ENCODE measurements at regions of chr17 and their contacts with region 1.

Region 1: GRCh38 chr17:60599620-60600489 is at the start of gene PPM1D:
- DNase-seq: peak; percentile 99
- ATAC-seq: peak; percentile 93
- H3K4me3 ChIP-seq: peak within 1 kb of the TSS; percentile 82 to 98 (median 92)
- H3K4me3 Mint-ChIP-seq: peak within 1 kb of the TSS; percentile 91
- H3K27ac ChIP-seq: peak within 1 kb of the TSS; percentile 92 to 94
- H3K27ac Mint-ChIP-seq: peak within 1 kb of the TSS; percentile 92
- H3K4me1 ChIP-seq: peaks cover 24 to 28% of the 10 kb centered on the region in 2 donors
- H3K4me1 Mint-ChIP-seq: peaks cover 44% of the 10 kb centered on the region
- H3K27me3 ChIP-seq: no peaks in the 10 kb centered on the region
- H3K27me3 Mint-ChIP-seq: no peaks in the 10 kb centered on the region
- CTCF ChIP-seq: no peak
- total RNA-seq, gene PPM1D: 27.2 and 28.6 TPM in 2 replicates

Region 2: DNA sequence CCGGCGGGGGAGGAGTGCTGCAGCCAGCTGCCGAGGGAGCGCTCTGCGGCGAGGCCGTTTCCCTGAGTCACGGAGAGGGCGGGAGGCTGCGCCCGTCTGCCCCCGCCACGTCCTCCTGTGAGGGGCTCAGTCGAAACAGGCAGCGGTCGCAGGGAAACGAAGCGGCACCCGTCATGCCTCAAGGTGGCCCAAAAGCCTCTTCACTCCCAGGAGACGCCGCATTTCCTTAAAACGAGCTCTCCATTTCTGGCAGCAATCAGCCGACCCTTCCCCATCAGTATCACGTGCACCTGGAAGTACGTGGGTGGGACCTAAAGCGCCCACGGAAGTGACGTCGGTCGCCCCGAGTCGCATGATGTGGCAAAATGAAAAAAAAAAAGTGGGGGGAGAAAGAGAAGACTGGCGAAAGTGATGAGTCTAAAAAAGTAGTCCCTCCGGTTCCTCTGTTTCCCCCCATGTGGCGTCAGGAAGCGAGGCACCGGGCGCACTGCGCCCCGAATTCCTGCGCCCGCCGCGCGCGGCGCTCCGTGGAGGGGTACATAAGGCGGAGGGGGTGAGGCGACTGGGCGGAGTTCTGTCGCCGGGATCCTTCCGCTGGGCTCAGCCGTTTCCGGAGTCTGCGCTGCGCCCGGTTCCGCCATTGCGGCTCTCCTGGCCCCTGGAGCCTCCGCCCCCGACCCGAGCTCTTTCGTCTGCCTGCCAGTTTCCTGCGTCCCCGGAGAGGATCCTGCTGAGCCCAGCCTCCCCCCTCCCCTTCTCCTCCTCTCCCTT is 980.4 kb before region 1 on chr17 and contains the start of gene CLTC:
- CTCF ChIA-PET with region 1: no interaction called
- POLR2A ChIA-PET with region 1: no interaction called
- intact Hi-C with region 1: loop called (anchors 2 kb)
- DNase-seq: peak; percentile 100
- ATAC-seq: peak; percentile 80
- H3K4me3 ChIP-seq: peak within 1 kb of the TSS; percentile 69 to 100 (median 99)
- H3K4me3 Mint-ChIP-seq: peak within 1 kb of the TSS; percentile 90
- H3K27ac ChIP-seq: peak within 1 kb of the TSS; percentile 96 to 99
- H3K27ac Mint-ChIP-seq: peak within 1 kb of the TSS; percentile 97
- H3K4me1 ChIP-seq: peaks cover 44 to 48% of the 10 kb centered on the region in 2 donors
- H3K4me1 Mint-ChIP-seq: peaks cover 47% of the 10 kb centered on the region
- H3K27me3 ChIP-seq: no peaks in the 10 kb centered on the region
- H3K27me3 Mint-ChIP-seq: no peaks in the 10 kb centered on the region
- CTCF ChIP-seq: no peak
- total RNA-seq, gene CLTC: 114 and 126 TPM in 2 replicates

Region 3: GRCh38 chr17:60392042-60392844 is 207.6 kb before region 1 on chr17 and contains the start of gene USP32:
- CTCF ChIA-PET with region 1: no interaction called
- POLR2A ChIA-PET with region 1: interaction called, 3 read pairs
- intact Hi-C with region 1: loop called (anchors 1 kb)
- DNase-seq: peak; percentile 98
- ATAC-seq: peak; percentile 88
- H3K4me3 ChIP-seq: peak within 1 kb of the TSS; percentile 71 to 95 (median 87)
- H3K4me3 Mint-ChIP-seq: peak within 1 kb of the TSS; percentile 96
- H3K27ac ChIP-seq: peak within 1 kb of the TSS; percentile 92 to 96
- H3K27ac Mint-ChIP-seq: peak within 1 kb of the TSS; percentile 97
- H3K4me1 ChIP-seq: peaks cover 43 to 44% of the 10 kb centered on the region in 2 donors
- H3K4me1 Mint-ChIP-seq: peaks cover 67% of the 10 kb centered on the region
- H3K27me3 ChIP-seq: no peaks in the 10 kb centered on the region
- H3K27me3 Mint-ChIP-seq: no peaks in the 10 kb centered on the region
- CTCF ChIP-seq: no peak
- total RNA-seq, gene USP32: 48.8 and 56.9 TPM in 2 replicates

Region 4: DNA sequence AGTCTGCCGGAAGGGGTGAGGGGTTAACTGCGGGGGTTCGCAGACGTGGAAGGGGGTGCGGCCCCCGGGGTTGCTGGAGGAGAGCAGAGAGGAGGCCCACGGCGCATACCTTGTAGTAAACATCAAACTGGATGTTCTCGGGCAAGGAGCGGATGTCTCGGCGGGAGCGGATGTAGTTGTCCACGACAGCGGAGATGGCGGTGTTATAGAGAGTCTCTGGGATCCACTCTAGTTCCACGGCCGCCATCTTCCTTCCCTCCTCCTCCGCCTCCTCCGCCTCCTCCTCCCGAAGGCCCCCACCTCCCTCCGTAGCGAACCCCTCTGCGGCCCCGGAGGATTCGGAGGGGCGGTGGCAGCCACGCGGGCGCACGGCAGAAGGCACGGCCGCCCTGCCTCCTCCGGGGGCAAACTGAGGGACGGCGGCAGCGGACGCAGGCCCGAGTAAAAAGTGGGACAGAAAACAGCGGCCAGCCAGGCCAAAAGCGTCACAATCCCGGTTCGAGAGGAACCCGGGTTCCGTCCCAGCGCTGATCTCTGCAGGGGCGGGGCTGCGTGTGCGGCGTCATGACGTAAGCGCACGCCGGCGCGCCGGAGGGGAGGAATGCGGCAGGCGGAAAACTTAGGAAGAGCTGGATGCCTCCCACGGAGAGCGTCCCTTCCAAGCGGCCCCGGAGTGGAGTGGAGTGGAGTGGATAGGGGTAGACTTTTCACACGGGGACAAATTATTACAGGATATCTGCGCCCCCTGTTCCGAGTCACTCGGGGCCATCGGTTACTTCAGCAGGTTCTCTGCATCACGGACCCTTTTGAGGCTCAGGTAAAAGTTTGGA is 74.0 kb before region 1 on chr17 and contains the start of gene APPBP2:
- CTCF ChIA-PET with region 1: no interaction called
- POLR2A ChIA-PET with region 1: interaction called, 3 read pairs
- intact Hi-C with region 1: loop called (anchors 1 kb)
- DNase-seq: peak; percentile 87
- ATAC-seq: peak; percentile 88
- H3K4me3 ChIP-seq: peak within 1 kb of the TSS; percentile 66 to 98 (median 96)
- H3K4me3 Mint-ChIP-seq: peak within 1 kb of the TSS; percentile 100
- H3K27ac ChIP-seq: peak within 1 kb of the TSS; percentile 88 to 94
- H3K27ac Mint-ChIP-seq: peak within 1 kb of the TSS; percentile 98
- H3K4me1 ChIP-seq: peaks cover 17 to 21% of the 10 kb centered on the region in 2 donors
- H3K4me1 Mint-ChIP-seq: peaks cover 45% of the 10 kb centered on the region
- H3K27me3 ChIP-seq: no peaks in the 10 kb centered on the region
- H3K27me3 Mint-ChIP-seq: no peaks in the 10 kb centered on the region
- CTCF ChIP-seq: no peak
- total RNA-seq, gene APPBP2: 38.8 and 44.1 TPM in 2 replicates

Region 5: GRCh38 chr17:60579090-60579489 is 20.8 kb before region 1 on chr17:
- CTCF ChIA-PET with region 1: no interaction called
- POLR2A ChIA-PET with region 1: no interaction called
- intact Hi-C with region 1: no loop called
- DNase-seq: no peak
- ATAC-seq: no peak
- H3K4me3 ChIP-seq: no peak overlapping the region
- H3K4me3 Mint-ChIP-seq: no peak overlapping the region
- H3K27ac ChIP-seq: no peak overlapping the region
- H3K27ac Mint-ChIP-seq: no peak overlapping the region
- H3K4me1 ChIP-seq: peaks cover 0 to 4% of the 10 kb centered on the region in 2 donors
- H3K4me1 Mint-ChIP-seq: peaks cover 4% of the 10 kb centered on the region
- H3K27me3 ChIP-seq: no peaks in the 10 kb centered on the region
- H3K27me3 Mint-ChIP-seq: peaks cover 10% of the 10 kb centered on the region
- CTCF ChIP-seq: no peak

Region 6: GRCh38 chr17:60677308-60678124 is 77.7 kb after region 1 on chr17 and contains the start of gene BCAS3:
- CTCF ChIA-PET with region 1: interaction called, 5 read pairs
- POLR2A ChIA-PET with region 1: interaction called, 5 read pairs
- intact Hi-C with region 1: loop called (anchors 1 kb)
- DNase-seq: peak; percentile 98
- ATAC-seq: peak; percentile 94
- H3K4me3 ChIP-seq: peak within 1 kb of the TSS; percentile 78 to 99 (median 96)
- H3K4me3 Mint-ChIP-seq: peak within 1 kb of the TSS; percentile 97
- H3K27ac ChIP-seq: peak within 1 kb of the TSS; percentile 67 to 79
- H3K27ac Mint-ChIP-seq: peak within 1 kb of the TSS; percentile 96
- H3K4me1 ChIP-seq: peaks cover 9 to 12% of the 10 kb centered on the region in 2 donors
- H3K4me1 Mint-ChIP-seq: peaks cover 19% of the 10 kb centered on the region
- H3K27me3 ChIP-seq: no peaks in the 10 kb centered on the region
- H3K27me3 Mint-ChIP-seq: no peaks in the 10 kb centered on the region
- CTCF ChIP-seq: no peak
- total RNA-seq, gene BCAS3: 71.8 and 73.4 TPM in 2 replicates